ENCODE measurements at regions of chr10 and their contacts with region 1.

Region 1: GRCh38 chr10:14822879-14823755 is 14.7 kb downstream of the CDNF start:
- DNase-seq: no peak
- H3K4me3 ChIP-seq: no peak overlapping the region
- H3K27ac ChIP-seq: no peak overlapping the region
- H3K4me1 ChIP-seq: no peaks in the 10 kb centered on the region
- H3K27me3 ChIP-seq: no peaks in the 10 kb centered on the region
- CTCF ChIP-seq: peak; percentile 42 to 52 (median 51)
- EP300 ChIP-seq: no peak
- POLR2A ChIP-seq: no peak

Region 2: GRCh38 chr10:14056610-14057332 is 766.3 kb before region 1 on chr10:
- intact Hi-C with region 1: no loop called
- DNase-seq: no peak
- H3K4me3 ChIP-seq: no peak overlapping the region
- H3K27ac ChIP-seq: peak overlapping the region in 3 of 4 donors; percentile 22 to 69 (median 32)
- H3K4me1 ChIP-seq: peaks cover 0 to 9% (median 1%) of the 10 kb centered on the region in 4 donors
- H3K27me3 ChIP-seq: no peaks in the 10 kb centered on the region
- CTCF ChIP-seq: no peak
- EP300 ChIP-seq: no peak
- POLR2A ChIP-seq: no peak

Region 3: DNA sequence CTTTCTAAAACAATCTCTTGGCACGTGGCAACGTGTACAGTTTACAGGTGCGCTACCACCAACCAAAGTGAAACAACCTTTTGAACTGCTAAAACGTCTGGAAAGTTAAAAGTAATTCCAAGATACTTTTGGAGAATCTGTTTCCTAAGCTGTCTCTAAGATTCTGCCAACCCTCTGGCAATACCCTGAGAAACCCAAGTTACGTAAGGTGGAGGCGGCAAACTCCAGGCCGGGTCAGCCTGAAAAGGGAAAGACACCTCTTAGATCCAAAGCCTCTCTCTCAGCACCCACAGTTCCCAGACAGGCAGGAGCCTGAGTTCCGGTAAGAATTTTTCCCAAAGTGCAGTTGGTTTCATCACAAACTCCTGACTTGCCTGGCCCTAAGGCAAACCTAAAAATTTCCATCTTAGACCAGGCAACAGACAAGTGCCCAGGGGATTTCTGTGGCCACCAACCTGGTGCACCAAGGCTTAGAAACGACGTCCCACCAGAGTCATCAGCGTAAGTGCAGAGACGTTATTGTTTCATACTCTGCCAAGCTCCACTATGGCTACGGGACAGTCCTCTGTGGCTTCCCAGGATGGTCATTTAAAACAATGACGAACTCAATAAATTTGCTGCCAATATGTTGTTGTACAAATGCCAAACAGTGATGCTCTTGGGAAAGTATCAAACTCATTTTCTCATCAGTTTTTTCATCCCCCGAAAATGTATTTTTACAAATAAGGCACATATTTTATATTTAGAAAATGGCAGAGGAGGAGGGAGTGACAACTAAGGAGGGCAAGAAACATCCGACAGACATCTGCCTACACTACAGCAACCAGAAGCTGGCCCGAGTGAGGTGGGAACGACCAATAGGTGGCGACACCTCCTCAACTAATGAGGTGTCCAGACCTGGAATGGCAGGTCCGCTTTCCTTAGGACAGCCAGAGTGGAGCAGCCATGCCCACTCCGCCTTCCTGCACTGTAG is 286.6 kb before region 1 on chr10:
- intact Hi-C with region 1: loop called (anchors 5 kb)
- DNase-seq: no peak
- H3K4me3 ChIP-seq: no peak overlapping the region
- H3K27ac ChIP-seq: no peak overlapping the region
- H3K4me1 ChIP-seq: peaks cover 3 to 26% (median 23%) of the 10 kb centered on the region in 4 donors
- H3K27me3 ChIP-seq: no peaks in the 10 kb centered on the region
- CTCF ChIP-seq: peak; percentile 56 to 61 (median 60)
- EP300 ChIP-seq: no peak
- POLR2A ChIP-seq: no peak

Measured in esophagus muscularis mucosa (tissue), 4 donors.